Dorsolateral prefrontal cortex (tissue), 120 donors: ENCODE measurements at regions of chr4 and their contacts with region 1.

Region 1: GRCh38 chr4:133741766-133742165 is 459.8 kb downstream of the PABPC4L start:
- DNase-seq: no peak
- H3K4me3 ChIP-seq: no peak overlapping the region
- H3K27ac ChIP-seq: no peak overlapping the region
- H3K27me3 ChIP-seq: no peaks in the 10 kb centered on the region
- CTCF ChIP-seq: no peak

Region 2: GRCh38 chr4:135098061-135098460 is 1356.3 kb after region 1 on chr4:
- intact Hi-C with region 1: no loop called
- DNase-seq: no peak
- H3K4me3 ChIP-seq: no peak overlapping the region
- H3K27ac ChIP-seq: no peak overlapping the region
- H3K27me3 ChIP-seq: no peaks in the 10 kb centered on the region
- CTCF ChIP-seq: no peak

Region 3: DNA sequence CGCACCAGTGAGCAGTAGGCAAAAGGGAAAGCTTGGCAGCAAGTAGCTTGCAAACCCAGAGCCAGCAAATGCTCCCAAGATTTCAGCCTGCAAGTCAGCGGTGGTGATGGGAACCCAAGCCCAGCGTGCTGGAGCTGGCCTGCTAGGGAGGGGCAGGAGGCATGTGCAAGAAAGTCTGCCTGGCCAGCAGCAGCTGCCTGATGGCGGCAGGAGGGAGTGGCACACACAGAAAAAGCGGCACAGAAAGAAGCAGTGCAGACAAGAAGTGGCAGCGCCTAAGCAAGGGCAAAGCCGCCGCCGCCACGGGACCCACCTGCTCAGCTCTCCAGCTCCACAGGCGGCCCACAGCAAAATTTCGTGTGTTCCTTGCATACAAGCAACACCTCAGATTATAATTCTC is 1666.3 kb after region 1 on chr4:
- intact Hi-C with region 1: loop called in 1 of 2 experiments (anchors 10 kb)
- DNase-seq: no peak
- H3K4me3 ChIP-seq: no peak overlapping the region
- H3K27ac ChIP-seq: no peak overlapping the region
- H3K27me3 ChIP-seq: no peaks in the 10 kb centered on the region
- CTCF ChIP-seq: no peak